ENCODE measurements at regions of chr17 and their contacts with region 1.

Region 1: DNA sequence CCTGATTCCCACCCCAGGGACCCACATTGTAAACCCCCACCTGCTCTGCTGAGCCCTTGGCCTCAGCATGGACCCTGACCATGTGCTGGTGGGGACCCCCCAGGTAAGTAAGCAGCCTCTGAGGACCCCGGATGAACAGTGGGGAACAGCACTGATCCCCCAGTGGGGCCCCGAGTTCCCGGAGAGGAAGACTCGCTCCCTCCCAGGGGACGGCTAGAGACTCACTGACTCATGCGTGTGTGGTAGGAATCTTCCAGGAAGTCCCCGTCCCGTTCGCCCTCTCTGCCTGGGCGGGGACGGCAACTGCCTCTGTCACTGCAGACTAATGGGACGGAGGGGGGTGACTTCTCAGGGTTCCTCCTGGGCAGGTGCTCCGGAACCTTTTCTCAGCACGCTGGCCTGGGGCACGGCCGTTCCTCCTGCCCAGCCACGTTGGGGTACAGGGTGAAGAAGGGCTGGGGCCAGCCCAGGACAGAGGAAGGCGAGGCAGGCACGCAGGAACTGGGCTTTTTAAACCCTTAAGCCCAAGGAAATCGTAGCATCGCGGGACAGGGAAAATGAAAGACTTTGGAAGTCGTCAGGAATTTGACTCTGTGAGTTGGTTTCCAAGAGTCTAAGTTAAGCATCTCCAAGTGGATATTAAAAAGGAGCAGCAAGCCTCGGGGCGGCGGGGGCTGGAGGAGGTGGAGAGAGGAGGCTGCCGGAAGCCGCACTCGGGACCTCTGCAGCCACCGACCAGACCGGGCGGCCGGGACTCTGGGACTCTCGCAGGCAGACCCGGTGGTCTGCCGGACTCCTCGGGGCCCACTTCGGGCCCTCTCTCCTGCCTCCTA is 178.7 kb downstream of the SEC14L1 start:
- DNase-seq: peak; percentile 68
- ATAC-seq: peak; percentile 41
- H3K4me3 Mint-ChIP-seq: peak overlapping the region; percentile 92
- H3K27ac Mint-ChIP-seq: peak overlapping the region; percentile 89
- H3K4me1 Mint-ChIP-seq: peaks cover 76% of the 10 kb centered on the region
- H3K27me3 Mint-ChIP-seq: no peaks in the 10 kb centered on the region
- CTCF ChIP-seq: no peak

Region 2: GRCh38 chr17:77280980-77281903 is 38.2 kb before region 1 on chr17:
- CTCF ChIA-PET with region 1: interaction called, 6 read pairs
- POLR2A ChIA-PET with region 1: interaction called, 23 read pairs
- intact Hi-C with region 1: no loop called
- DNase-seq: peak; percentile 74
- ATAC-seq: peak; percentile 93
- H3K4me3 Mint-ChIP-seq: peak overlapping the region; percentile 82
- H3K27ac Mint-ChIP-seq: peak overlapping the region; percentile 85
- H3K4me1 Mint-ChIP-seq: peaks cover 30% of the 10 kb centered on the region
- H3K27me3 Mint-ChIP-seq: peaks cover 4% of the 10 kb centered on the region
- CTCF ChIP-seq: no peak

Region 3: GRCh38 chr17:77388384-77389311 is 69.2 kb after region 1 on chr17:
- CTCF ChIA-PET with region 1: no interaction called
- POLR2A ChIA-PET with region 1: interaction called, 13 read pairs
- intact Hi-C with region 1: no loop called
- DNase-seq: no peak
- ATAC-seq: no peak
- H3K4me3 Mint-ChIP-seq: peak overlapping the region; percentile 46
- H3K27ac Mint-ChIP-seq: peak overlapping the region; percentile 80
- H3K4me1 Mint-ChIP-seq: peaks cover 43% of the 10 kb centered on the region
- H3K27me3 Mint-ChIP-seq: no peaks in the 10 kb centered on the region
- CTCF ChIP-seq: no peak

Region 4: GRCh38 chr17:77437017-77437416 is 117.6 kb after region 1 on chr17:
- CTCF ChIA-PET with region 1: no interaction called
- POLR2A ChIA-PET with region 1: interaction called, 72 read pairs
- intact Hi-C with region 1: no loop called
- DNase-seq: no peak
- ATAC-seq: no peak
- H3K4me3 Mint-ChIP-seq: peak overlapping the region; percentile 35
- H3K27ac Mint-ChIP-seq: peak overlapping the region; percentile 94
- H3K4me1 Mint-ChIP-seq: peaks cover 97% of the 10 kb centered on the region
- H3K27me3 Mint-ChIP-seq: no peaks in the 10 kb centered on the region
- CTCF ChIP-seq: no peak

Region 5: DNA sequence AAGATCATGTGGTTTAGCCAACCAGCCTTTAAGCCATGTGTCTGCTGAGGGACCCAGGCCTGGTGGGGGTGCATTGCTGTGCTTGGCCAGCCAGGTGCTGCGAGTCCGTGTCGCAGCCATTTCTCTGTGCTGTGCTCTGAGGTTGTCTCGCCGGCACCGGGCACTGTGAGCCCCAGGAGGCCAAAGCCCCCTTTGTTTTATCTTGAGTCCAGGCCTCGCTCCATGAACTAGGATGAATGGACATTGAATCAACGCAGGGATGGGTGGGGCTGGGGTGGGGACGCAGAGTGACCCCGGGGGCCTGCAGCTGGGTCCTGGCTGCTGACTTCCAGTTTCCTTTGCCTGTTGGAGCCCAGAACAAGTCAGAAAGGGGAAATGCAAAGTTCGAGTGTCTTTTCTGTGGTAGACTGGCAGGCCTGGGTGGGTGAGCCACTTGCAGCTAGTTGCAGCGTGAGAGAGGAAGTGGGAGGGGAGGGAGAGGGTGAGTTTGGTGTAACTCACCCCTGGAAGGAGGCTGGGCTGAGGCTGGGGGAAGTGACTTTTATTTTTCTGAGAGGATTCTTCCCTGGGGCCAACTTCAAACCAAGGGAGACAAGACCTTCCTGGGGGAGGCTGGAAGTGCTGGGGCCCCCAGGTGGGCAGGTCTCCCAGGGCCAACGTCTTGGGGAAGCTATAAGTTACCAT is 146.1 kb after region 1 on chr17:
- CTCF ChIA-PET with region 1: no interaction called
- POLR2A ChIA-PET with region 1: interaction called, 42 read pairs
- intact Hi-C with region 1: no loop called
- DNase-seq: peak; percentile 62
- ATAC-seq: peak; percentile 81
- H3K4me3 Mint-ChIP-seq: peak overlapping the region; percentile 75
- H3K27ac Mint-ChIP-seq: peak overlapping the region; percentile 93
- H3K4me1 Mint-ChIP-seq: peaks cover 94% of the 10 kb centered on the region
- H3K27me3 Mint-ChIP-seq: no peaks in the 10 kb centered on the region
- CTCF ChIP-seq: no peak

Region 6: GRCh38 chr17:77657839-77658238 is 338.4 kb after region 1 on chr17:
- CTCF ChIA-PET with region 1: no interaction called
- POLR2A ChIA-PET with region 1: no interaction called
- intact Hi-C with region 1: no loop called
- DNase-seq: no peak
- ATAC-seq: no peak
- H3K4me3 Mint-ChIP-seq: no peak overlapping the region
- H3K27ac Mint-ChIP-seq: no peak overlapping the region
- H3K4me1 Mint-ChIP-seq: no peaks in the 10 kb centered on the region
- H3K27me3 Mint-ChIP-seq: peaks cover 25% of the 10 kb centered on the region
- CTCF ChIP-seq: no peak